ENCODE measurements at regions of chr12 and their contacts with region 1.

Region 1: GRCh38 chr12:30847259-30847658 is 79.3 kb upstream of the TSPAN11 start:
- DNase-seq: no peak
- ATAC-seq: peak in 2 of 4 donors; percentile 31 to 32
- H3K4me3 ChIP-seq: no peak overlapping the region
- H3K27ac ChIP-seq: no peak overlapping the region
- H3K4me1 ChIP-seq: no peaks in the 10 kb centered on the region
- H3K27me3 ChIP-seq: no peaks in the 10 kb centered on the region
- CTCF ChIP-seq: peak; percentile 61 to 75 (median 66)
- POLR2A ChIP-seq: no peak

Region 2: GRCh38 chr12:30985814-30986452 is 138.7 kb after region 1 on chr12:
- intact Hi-C with region 1: loop called in 1 of 2 experiments (anchors 5 kb)
- DNase-seq: peak; percentile 53 to 65 (median 57)
- ATAC-seq: peak; percentile 71 to 89 (median 77)
- H3K4me3 ChIP-seq: no peak overlapping the region
- H3K27ac ChIP-seq: no peak overlapping the region
- H3K4me1 ChIP-seq: no peaks in the 10 kb centered on the region
- H3K27me3 ChIP-seq: no peaks in the 10 kb centered on the region
- CTCF ChIP-seq: peak; percentile 53 to 68 (median 57)
- POLR2A ChIP-seq: no peak

Region 3: DNA sequence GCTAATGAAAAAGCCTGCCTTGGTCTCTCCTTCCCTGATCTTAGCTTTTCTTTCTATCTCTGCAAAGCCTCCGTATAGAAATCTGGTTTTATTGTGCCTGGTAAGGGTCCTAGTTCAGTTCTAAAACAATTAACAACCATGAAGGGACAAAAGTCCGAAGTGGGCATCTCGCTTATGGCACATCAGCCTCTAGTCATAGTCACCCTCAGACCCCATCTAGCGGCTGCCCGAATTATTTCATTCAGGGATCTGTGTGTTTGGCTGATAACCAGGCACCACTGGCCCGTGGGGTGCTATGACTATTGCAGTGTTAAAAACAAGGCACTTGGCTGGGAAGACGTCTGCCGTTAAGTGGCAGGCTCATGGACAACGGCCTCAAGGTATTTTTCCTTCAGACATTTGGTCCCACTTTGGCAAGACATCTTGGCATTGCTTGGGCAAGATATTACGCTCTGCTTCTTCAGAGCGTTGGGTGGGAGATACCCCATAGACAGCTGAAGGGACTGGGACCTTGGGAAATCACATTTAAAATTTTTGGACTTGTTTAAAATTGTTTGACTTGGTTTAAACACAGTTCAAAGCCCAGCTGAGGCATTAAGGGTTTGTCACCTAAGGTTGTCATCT is 391.6 kb after region 1 on chr12:
- intact Hi-C with region 1: loop called in 1 of 2 experiments (anchors 10 kb)
- DNase-seq: peak in 2 of 3 donors; percentile 54 to 76
- ATAC-seq: peak; percentile 86 to 92 (median 89)
- H3K4me3 ChIP-seq: no peak overlapping the region
- H3K27ac ChIP-seq: no peak overlapping the region
- H3K4me1 ChIP-seq: no peaks in the 10 kb centered on the region
- H3K27me3 ChIP-seq: no peaks in the 10 kb centered on the region
- CTCF ChIP-seq: peak; percentile 70 to 80 (median 70)
- POLR2A ChIP-seq: no peak

Measured in right lobe of liver (tissue), 6 donors.